CD8-positive, alpha-beta T cell (primary cell): ENCODE measurements at regions of chr17 and their contacts with region 1.

Region 1: GRCh38 chr17:58249270-58250133 is 11.1 kb downstream of the LPO start:
- DNase-seq: peak; percentile 51 to 88 (median 74)
- ATAC-seq: peak; percentile 98
- H3K4me3 ChIP-seq: peak overlapping the region; percentile 53 to 59
- H3K4me3 Mint-ChIP-seq: peak overlapping the region; percentile 84
- H3K27ac ChIP-seq: no peak overlapping the region
- H3K27ac Mint-ChIP-seq: no peak overlapping the region
- H3K4me1 ChIP-seq: peaks cover 17% of the 10 kb centered on the region
- H3K4me1 Mint-ChIP-seq: peaks cover 17% of the 10 kb centered on the region
- H3K27me3 ChIP-seq: peaks cover 0 to 5% of the 10 kb centered on the region in 2 experiments
- H3K27me3 Mint-ChIP-seq: peaks cover 8% of the 10 kb centered on the region
- CTCF ChIP-seq: peak; percentile 98

Region 2: DNA sequence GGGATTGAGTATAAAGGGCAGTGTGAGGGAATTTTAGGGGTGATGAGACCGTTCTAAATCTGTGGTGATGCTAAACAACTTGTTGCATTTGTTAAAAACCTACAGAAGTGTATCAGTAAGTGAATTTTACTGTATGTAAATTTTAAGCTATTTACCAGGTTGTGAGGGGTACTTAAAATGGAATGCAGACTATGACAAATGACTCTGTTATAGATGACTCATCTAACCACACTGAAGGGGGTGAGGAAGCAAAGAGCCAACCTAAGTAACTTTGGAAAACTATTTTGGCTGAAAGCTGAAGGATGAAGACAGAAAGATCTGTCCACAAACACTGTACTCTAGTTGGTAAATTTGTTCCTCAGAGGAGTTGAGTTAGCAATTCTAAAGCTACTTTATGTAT is 25.2 kb before region 1 on chr17:
- CTCF ChIA-PET with region 1: interaction called, 11 read pairs
- POLR2A ChIA-PET with region 1: no interaction called
- intact Hi-C with region 1: loop called in 1 of 2 experiments (anchors 1 kb)
- DNase-seq: no peak
- ATAC-seq: no peak
- H3K4me3 ChIP-seq: no peak overlapping the region
- H3K4me3 Mint-ChIP-seq: no peak overlapping the region
- H3K27ac ChIP-seq: no peak overlapping the region
- H3K27ac Mint-ChIP-seq: no peak overlapping the region
- H3K4me1 ChIP-seq: peaks cover 9% of the 10 kb centered on the region
- H3K4me1 Mint-ChIP-seq: peaks cover 10% of the 10 kb centered on the region
- H3K27me3 ChIP-seq: no peaks in the 10 kb centered on the region
- H3K27me3 Mint-ChIP-seq: peaks cover 18% of the 10 kb centered on the region
- CTCF ChIP-seq: no peak

Region 3: DNA sequence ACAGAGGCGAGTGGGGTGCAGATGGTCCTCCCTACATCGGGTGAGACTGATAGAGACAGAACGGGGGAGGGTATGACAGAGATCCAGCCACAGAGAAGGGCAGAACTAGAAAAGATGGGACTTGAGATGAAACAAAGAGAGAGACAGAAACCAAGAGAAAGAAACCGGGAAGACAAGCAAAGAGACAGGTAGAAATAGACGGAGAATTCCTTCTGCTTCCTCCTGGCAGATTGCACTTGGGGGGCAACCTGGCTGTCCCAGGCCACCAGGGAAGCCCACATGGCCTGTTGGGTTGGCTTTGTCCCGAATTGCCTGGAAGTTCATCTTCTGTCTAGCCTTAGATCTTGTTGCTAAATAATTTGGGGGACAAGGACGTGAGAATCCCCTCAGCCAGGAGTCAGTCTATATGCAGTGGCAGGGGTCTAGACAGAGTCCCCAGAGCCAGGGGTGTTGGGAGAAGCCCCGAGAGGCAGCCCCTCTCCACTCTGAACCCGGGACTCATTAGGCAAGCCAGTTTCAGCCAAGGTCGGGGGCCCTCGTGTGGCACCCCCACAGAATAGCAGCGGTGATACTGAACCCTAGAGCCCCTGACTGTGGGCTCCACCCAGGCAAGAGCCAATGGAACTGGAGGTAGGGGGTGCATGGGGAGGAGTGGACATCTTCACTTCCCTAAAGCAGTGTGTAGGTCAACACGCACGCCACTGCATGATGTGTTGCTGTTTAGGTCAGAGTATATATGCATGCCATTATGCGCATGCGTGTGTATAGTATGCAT is 79.7 kb after region 1 on chr17:
- CTCF ChIA-PET with region 1: no interaction called
- POLR2A ChIA-PET with region 1: interaction called, 3 read pairs
- intact Hi-C with region 1: loop called in 1 of 2 experiments (anchors 2 kb)
- DNase-seq: peak in 8 of 9 experiments; percentile 56 to 90 (median 77)
- ATAC-seq: peak; percentile 36
- H3K4me3 ChIP-seq: peak overlapping the region; percentile 90 to 99
- H3K4me3 Mint-ChIP-seq: peak overlapping the region; percentile 92
- H3K27ac ChIP-seq: peak overlapping the region; percentile 48 to 99
- H3K27ac Mint-ChIP-seq: peak overlapping the region; percentile 96
- H3K4me1 ChIP-seq: peaks cover 47% of the 10 kb centered on the region
- H3K4me1 Mint-ChIP-seq: peaks cover 54% of the 10 kb centered on the region
- H3K27me3 ChIP-seq: no peaks in the 10 kb centered on the region
- H3K27me3 Mint-ChIP-seq: no peaks in the 10 kb centered on the region
- CTCF ChIP-seq: peak; percentile 84

Region 4: GRCh38 chr17:58387834-58388233 is 138.3 kb after region 1 on chr17:
- CTCF ChIA-PET with region 1: no interaction called
- POLR2A ChIA-PET with region 1: no interaction called
- intact Hi-C with region 1: no loop called
- DNase-seq: peak in 2 of 9 experiments; percentile 43 to 49
- ATAC-seq: peak; percentile 79
- H3K4me3 ChIP-seq: no peak overlapping the region
- H3K4me3 Mint-ChIP-seq: no peak overlapping the region
- H3K27ac ChIP-seq: no peak overlapping the region
- H3K27ac Mint-ChIP-seq: no peak overlapping the region
- H3K4me1 ChIP-seq: no peaks in the 10 kb centered on the region
- H3K4me1 Mint-ChIP-seq: peaks cover 6% of the 10 kb centered on the region
- H3K27me3 ChIP-seq: no peaks in the 10 kb centered on the region
- H3K27me3 Mint-ChIP-seq: no peaks in the 10 kb centered on the region
- CTCF ChIP-seq: no peak

Region 5: GRCh38 chr17:58447039-58447975 is 197.8 kb after region 1 on chr17:
- CTCF ChIA-PET with region 1: no interaction called
- POLR2A ChIA-PET with region 1: no interaction called
- intact Hi-C with region 1: loop called in 1 of 2 experiments (anchors 2 kb)
- DNase-seq: peak; percentile 20 to 79 (median 58)
- ATAC-seq: no peak
- H3K4me3 ChIP-seq: no peak overlapping the region
- H3K4me3 Mint-ChIP-seq: no peak overlapping the region
- H3K27ac ChIP-seq: no peak overlapping the region
- H3K27ac Mint-ChIP-seq: no peak overlapping the region
- H3K4me1 ChIP-seq: no peaks in the 10 kb centered on the region
- H3K4me1 Mint-ChIP-seq: peaks cover 3% of the 10 kb centered on the region
- H3K27me3 ChIP-seq: no peaks in the 10 kb centered on the region
- H3K27me3 Mint-ChIP-seq: no peaks in the 10 kb centered on the region
- CTCF ChIP-seq: peak; percentile 60

Region 6: DNA sequence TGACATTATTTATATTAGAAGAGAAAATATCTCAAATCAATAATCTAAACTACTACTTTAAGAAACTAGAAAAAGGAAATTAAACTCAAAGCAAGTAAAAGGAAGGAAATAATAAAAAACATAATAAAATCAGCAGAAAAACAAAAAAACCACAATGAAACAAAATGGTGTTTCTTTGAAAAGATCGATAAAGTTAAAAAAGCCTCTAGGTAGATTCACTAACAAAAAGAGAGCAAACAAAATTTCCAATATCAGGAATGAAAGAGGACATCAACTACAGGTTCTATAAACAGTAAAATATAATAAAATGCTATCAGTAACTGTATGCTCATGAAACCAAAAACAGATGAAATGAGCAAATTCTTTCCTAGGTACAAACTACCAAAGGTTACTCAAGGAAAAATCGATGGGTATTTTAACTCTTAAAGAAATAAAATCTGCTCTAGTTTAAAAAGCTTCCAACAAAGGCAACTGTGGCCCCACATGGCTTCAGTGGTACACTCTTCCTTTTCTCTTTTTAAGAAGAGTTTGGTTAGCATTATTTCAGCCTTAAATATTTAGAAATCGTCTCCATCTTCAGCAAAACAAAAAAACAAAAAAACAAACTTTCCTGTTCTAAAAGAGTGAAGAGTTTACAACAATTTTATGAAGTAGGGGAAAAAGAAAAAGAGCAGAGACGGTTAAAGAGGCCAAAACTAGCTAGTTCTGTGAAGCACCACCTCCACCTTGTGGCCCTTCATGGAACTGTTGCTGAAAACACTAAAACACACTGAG is 755.0 kb after region 1 on chr17:
- CTCF ChIA-PET with region 1: no interaction called
- POLR2A ChIA-PET with region 1: no interaction called
- intact Hi-C with region 1: loop called in 1 of 2 experiments (anchors 5 kb)
- DNase-seq: peak; percentile 52 to 82 (median 74)
- ATAC-seq: peak; percentile 54
- H3K4me3 ChIP-seq: no peak overlapping the region
- H3K4me3 Mint-ChIP-seq: no peak overlapping the region
- H3K27ac ChIP-seq: peak overlapping the region in 1 of 2 experiments; percentile 40
- H3K27ac Mint-ChIP-seq: peak overlapping the region; percentile 60
- H3K4me1 ChIP-seq: peaks cover 15% of the 10 kb centered on the region
- H3K4me1 Mint-ChIP-seq: peaks cover 13% of the 10 kb centered on the region
- H3K27me3 ChIP-seq: no peaks in the 10 kb centered on the region
- H3K27me3 Mint-ChIP-seq: no peaks in the 10 kb centered on the region
- CTCF ChIP-seq: peak; percentile 98